Activated CD4-positive, alpha-beta memory T cell treated with anti-CD3 and anti-CD28 coated beads for 36 hours (primary cell): ENCODE measurements at regions of chr10 and their contacts with region 1.

Region 1: DNA sequence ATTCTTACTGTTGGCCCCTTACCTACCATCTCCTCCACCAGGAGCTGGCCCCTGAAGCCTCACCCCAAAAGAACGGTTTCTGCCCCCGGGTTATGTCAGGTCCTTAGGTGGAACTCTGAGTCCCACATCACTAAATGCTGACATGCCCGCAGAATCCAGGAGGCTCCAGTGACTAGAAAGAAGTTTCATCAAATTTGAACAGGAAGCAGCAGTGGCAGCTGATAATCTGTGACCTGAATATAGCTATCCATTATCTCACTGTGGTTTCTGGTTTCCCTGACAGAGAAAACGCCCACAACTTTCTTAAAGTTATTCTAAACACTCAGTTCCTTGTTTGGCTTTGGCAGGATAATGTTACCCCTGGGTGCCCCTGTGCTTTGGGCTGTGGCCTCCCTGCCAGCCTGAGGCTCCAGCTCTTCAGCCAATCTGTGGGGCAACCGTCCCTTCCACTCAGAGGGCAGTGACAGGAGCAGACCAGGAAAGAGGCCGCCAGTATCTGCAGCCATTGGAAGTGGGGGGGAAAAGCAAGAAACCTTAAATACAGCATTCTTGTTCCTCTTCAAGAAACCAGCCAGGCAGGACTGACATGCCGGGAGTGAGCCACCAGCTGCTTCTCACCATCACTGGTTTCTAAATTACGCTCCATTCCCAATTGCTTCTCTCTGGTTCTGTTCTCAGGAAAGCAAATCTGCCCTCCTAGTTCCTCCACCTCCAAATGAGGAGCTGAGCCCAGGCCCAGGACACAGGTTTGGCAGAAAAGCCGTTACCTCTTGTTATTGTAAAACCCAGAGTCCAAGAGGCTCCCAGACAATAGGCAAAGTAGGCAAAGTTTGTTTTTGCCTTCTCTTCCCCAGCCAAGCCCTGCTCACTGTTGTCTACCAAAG is 41.2 kb upstream of the VCL start:
- DNase-seq: peak; percentile 53
- H3K4me3 Mint-ChIP-seq: peak overlapping the region; percentile 26
- H3K27ac Mint-ChIP-seq: peak overlapping the region; percentile 85
- H3K4me1 Mint-ChIP-seq: peaks cover 49% of the 10 kb centered on the region
- H3K27me3 Mint-ChIP-seq: no peaks in the 10 kb centered on the region

Region 2: GRCh38 chr10:73886085-73886529 is 70.6 kb before region 1 on chr10:
- CTCF ChIA-PET with region 1: interaction called, 53 read pairs
- POLR2A ChIA-PET with region 1: no interaction called
- intact Hi-C with region 1: loop called (anchors 5 kb)
- DNase-seq: peak; percentile 78
- H3K4me3 Mint-ChIP-seq: no peak overlapping the region
- H3K27ac Mint-ChIP-seq: no peak overlapping the region
- H3K4me1 Mint-ChIP-seq: peaks cover 2% of the 10 kb centered on the region
- H3K27me3 Mint-ChIP-seq: no peaks in the 10 kb centered on the region

Region 3: DNA sequence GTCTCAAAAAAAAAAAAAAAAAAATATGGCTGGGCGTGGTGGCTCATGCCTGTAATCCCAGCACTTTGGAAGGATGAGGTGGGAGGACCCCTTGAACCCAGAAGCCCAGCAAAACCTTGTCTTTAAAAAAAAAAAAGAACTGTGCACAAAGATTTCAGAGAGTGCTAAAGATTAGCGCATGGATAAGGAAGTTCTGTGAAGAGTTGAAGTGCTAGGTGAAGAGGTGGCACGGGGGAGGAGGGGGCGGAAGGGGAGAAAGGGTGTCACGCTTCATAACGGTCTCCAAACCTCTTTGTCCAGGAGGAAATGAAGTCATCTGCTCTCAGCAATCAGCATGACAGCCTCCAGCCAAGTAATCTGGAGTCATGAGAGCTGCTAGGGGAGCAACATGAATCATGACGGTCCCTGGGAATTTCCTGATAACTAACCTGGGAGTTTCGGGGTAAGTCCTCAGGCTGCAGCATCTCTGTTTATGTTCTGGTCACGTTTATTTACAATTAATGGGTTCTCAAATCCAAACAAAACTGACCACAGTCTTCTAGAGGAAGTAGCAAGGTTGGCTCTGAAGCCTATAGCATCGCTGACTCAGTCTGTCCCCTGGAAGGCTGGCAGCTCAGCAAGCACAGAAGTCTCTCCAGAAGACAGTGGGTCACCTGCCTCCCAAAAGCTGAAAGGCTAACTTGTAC is 47.7 kb before region 1 on chr10:
- CTCF ChIA-PET with region 1: interaction called, 3 read pairs
- POLR2A ChIA-PET with region 1: no interaction called
- intact Hi-C with region 1: loop called (anchors 1 kb)
- DNase-seq: peak; percentile 87
- H3K4me3 Mint-ChIP-seq: peak overlapping the region; percentile 40
- H3K27ac Mint-ChIP-seq: peak overlapping the region; percentile 52
- H3K4me1 Mint-ChIP-seq: peaks cover 36% of the 10 kb centered on the region
- H3K27me3 Mint-ChIP-seq: peaks cover 38% of the 10 kb centered on the region

Region 4: GRCh38 chr10:73974309-73974946 is 17.7 kb after region 1 on chr10:
- CTCF ChIA-PET with region 1: interaction called, 13 read pairs
- POLR2A ChIA-PET with region 1: no interaction called
- intact Hi-C with region 1: no loop called
- DNase-seq: no peak
- H3K4me3 Mint-ChIP-seq: peak overlapping the region; percentile 9
- H3K27ac Mint-ChIP-seq: no peak overlapping the region
- H3K4me1 Mint-ChIP-seq: peaks cover 11% of the 10 kb centered on the region
- H3K27me3 Mint-ChIP-seq: no peaks in the 10 kb centered on the region

Region 5: GRCh38 chr10:74021248-74022055 is 64.7 kb after region 1 on chr10:
- CTCF ChIA-PET with region 1: interaction called, 6 read pairs
- POLR2A ChIA-PET with region 1: no interaction called
- intact Hi-C with region 1: loop called (anchors 2 kb)
- DNase-seq: peak; percentile 18
- H3K4me3 Mint-ChIP-seq: peak overlapping the region; percentile 22
- H3K27ac Mint-ChIP-seq: peak overlapping the region; percentile 79
- H3K4me1 Mint-ChIP-seq: peaks cover 37% of the 10 kb centered on the region
- H3K27me3 Mint-ChIP-seq: no peaks in the 10 kb centered on the region

Region 6: DNA sequence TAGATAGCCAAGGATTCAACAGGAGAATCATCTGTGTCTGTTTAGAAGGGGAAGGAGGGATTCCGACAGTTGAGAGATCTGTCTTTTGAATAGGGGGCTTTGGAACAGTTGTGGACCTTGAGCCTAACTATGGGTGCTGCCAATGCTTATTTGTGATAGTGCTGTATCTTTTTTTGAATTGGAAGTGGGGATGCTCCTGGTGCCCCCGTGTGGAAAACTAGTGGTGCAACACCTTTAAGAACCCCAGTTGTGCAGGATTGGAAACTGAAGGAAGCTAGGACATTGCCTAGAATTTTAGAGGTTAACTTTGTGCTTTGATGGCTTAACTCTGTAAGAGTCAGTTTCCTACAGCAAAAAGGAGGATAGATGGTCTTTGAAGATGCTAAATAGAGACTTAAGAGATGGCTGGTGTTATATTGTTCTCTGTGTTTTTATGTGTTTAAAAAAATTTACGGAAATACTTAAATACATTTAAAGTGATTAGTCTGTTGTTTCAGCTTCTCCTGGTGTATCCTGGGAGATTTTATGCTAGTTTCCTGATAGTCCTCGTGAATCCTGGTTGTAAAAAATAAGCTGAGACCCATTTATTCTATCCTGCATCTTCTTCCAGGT is 124.6 kb after region 1 on chr10:
- CTCF ChIA-PET with region 1: interaction called, 49 read pairs
- POLR2A ChIA-PET with region 1: interaction called, 3 read pairs
- intact Hi-C with region 1: loop called (anchors 1 kb)
- DNase-seq: peak; percentile 58
- H3K4me3 Mint-ChIP-seq: no peak overlapping the region
- H3K27ac Mint-ChIP-seq: no peak overlapping the region
- H3K4me1 Mint-ChIP-seq: peaks cover 45% of the 10 kb centered on the region
- H3K27me3 Mint-ChIP-seq: no peaks in the 10 kb centered on the region